ENCODE measurements at regions of chr6 and their contacts with region 1.

Region 1: DNA sequence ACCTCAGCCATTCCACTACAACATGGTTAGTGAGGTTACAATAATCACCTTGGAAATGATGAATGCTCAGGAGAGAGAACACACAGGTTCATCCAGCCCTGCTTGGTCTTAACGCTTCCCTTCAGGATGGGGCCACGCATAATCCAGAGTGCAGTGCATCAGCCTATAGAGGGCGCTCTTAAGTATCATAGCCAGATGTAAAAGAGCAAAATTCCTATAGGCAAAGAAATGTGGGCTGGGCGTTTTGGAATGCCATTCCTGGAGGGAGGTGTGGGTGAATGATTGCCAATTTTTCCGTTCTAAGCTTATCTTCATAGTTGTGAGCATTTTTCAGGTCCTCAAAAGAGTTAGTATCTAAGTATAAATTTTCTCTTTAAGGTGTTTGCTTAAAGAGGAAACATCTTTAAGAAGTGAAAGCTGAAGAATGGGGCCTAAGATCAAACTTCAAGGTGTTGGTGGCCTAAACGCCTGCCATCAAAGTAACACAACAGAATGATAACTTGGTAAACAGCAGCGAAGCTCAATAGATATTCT is 1.8 kb downstream of the RIPOR2 start:
- DNase-seq: peak; percentile 88
- H3K4me3 Mint-ChIP-seq: peak overlapping the region; percentile 89
- H3K27ac Mint-ChIP-seq: peak overlapping the region; percentile 95
- H3K4me1 Mint-ChIP-seq: peaks cover 86% of the 10 kb centered on the region
- H3K27me3 Mint-ChIP-seq: no peaks in the 10 kb centered on the region

Region 2: DNA sequence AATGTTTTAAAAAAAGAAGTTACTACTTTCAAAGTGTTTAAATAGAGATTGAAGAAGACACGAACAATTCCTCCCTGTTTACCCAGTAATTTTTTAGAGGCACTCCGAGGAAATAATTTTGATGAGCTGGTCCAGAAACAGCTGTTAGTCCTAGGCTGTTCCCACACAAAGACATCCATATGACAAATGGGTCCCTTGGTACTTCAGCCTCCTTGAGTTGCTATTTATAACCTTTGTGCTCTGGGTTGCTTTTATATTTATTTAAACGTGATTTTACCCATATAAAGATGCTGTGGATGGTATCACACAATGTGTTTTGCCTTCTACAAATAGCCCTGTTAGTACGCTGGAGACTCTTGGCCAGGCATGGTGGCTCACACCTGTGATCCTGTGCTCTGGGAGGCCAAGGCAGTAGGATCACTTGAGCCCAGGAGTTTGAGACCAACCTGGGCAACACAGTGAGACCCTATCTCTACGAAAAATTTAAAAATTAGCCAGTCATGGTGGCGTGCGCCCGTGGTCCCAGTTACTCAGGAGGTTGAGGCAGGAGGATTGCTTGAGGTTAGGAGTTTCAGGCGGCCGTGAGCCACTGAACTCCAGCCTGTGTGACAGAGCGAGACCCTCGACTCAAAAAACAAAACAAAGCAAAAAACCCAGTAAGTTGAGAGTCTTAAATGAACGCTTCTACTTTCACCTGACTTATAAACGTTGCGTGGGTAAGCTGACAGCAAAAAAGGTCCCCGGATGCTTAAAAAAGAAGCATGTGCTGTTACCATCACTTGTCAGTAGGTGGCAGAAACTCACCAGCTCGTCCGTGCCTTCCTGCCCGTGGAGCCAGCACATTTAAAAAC is 78.3 kb before region 1 on chr6:
- intact Hi-C with region 1: loop called (anchors 1 kb)
- DNase-seq: peak; percentile 91
- H3K4me3 Mint-ChIP-seq: peak overlapping the region; percentile 32
- H3K27ac Mint-ChIP-seq: peak overlapping the region; percentile 91
- H3K4me1 Mint-ChIP-seq: peaks cover 49% of the 10 kb centered on the region
- H3K27me3 Mint-ChIP-seq: no peaks in the 10 kb centered on the region

Region 3: DNA sequence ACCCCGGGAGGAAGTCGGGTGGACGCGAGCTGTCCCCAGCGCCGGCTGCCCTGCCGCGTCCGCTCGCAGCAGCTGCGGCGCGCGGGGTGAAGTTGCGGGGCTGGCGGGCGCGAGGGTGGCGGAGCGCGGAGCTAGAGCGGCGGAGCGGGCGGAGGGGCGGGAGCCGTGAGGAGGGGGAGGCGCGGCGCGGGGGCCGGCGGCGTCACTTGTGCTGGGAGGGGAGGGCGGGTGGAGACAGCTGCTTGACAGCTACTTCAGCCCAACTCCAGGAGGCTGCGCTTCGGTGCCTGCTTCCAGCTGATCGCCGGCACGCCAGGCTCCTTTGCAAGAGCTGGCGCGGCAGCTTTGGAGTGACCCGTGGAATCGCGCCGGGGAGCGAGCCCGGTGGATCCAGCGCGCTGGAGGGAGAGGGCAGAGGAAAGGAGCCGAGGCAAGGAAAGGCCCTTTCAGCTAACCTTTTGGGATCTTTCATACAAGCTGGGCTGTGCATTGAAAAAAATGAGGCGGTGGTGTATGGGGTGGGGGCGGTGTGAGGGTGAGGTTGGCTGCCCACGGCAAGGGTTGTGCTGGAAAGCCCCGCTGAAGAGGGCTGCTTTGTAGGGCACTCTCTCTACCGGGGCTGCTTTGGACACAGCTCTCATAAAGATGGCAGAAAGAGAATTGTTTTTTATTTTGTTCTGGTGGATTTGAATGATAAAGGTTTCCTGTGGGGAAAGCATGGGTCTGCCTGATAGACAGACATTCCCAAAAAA is 22.8 kb before region 1 on chr6:
- intact Hi-C with region 1: loop called (anchors 2 kb)
- DNase-seq: peak; percentile 82
- H3K4me3 Mint-ChIP-seq: peak overlapping the region; percentile 86
- H3K27ac Mint-ChIP-seq: peak overlapping the region; percentile 93
- H3K4me1 Mint-ChIP-seq: peaks cover 75% of the 10 kb centered on the region
- H3K27me3 Mint-ChIP-seq: no peaks in the 10 kb centered on the region

Region 4: GRCh38 chr6:24991810-24992467 is 58.0 kb after region 1 on chr6:
- intact Hi-C with region 1: loop called (anchors 1 kb)
- DNase-seq: peak; percentile 92
- H3K4me3 Mint-ChIP-seq: peak overlapping the region; percentile 34
- H3K27ac Mint-ChIP-seq: peak overlapping the region; percentile 85
- H3K4me1 Mint-ChIP-seq: peaks cover 42% of the 10 kb centered on the region
- H3K27me3 Mint-ChIP-seq: no peaks in the 10 kb centered on the region

Region 5: DNA sequence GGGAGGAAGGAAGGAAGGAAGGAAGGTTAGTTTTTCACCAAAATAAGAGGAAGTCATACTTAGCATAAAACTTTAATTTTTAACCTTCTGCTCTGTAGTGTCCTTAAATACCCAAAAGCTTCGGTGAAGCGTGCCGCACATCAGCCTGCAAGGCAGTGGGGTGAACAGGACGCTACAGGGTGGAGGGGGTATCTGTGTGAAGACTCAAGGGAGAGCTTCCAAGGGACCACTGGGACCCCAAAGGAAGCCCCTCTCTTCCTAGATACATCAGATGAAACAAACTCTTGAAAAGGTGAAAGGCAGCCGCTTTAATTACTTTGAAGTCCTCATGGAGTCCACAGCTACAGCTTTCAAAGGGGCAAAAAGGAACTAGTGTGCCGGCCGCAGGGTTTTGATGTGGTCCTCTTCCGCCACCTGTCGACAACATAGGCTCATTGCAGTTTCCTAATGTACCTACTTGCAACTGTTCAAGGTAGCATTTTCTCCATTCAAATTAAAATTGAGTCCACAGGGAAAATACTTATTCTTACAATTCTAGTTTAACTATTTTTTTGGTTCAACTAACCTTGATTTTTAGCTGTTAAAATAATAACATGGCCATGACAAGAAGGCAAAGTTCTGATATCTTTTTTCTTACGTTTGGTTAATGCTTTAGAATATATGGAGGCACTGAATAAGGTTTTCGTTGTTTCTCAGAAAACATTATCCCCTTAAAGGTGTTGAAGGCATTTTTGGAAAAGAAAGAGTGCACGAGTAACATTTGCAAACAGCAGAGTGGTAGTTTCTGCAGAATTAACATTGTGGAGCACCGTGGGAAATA is 136.8 kb after region 1 on chr6:
- intact Hi-C with region 1: loop called (anchors 2 kb)
- DNase-seq: peak; percentile 93
- H3K4me3 Mint-ChIP-seq: peak overlapping the region; percentile 48
- H3K27ac Mint-ChIP-seq: peak overlapping the region; percentile 78
- H3K4me1 Mint-ChIP-seq: peaks cover 9% of the 10 kb centered on the region
- H3K27me3 Mint-ChIP-seq: peaks cover 6% of the 10 kb centered on the region

Measured in activated CD4-positive, alpha-beta T cell treated with anti-CD3 and anti-CD28 coated beads, Interleukin-2, amount 10 ng/mL, durations not matched to agents 24 days and 14 days (primary cell).